ENCODE measurements at regions of chr1 and their contacts with region 1.

Region 1: GRCh38 chr1:186283374-186283773 is 91.7 kb downstream of the TPR start:
- DNase-seq: no peak
- ATAC-seq: peak; percentile 69
- H3K4me3 Mint-ChIP-seq: no peak overlapping the region
- H3K27ac Mint-ChIP-seq: peak overlapping the region; percentile 59
- H3K4me1 Mint-ChIP-seq: peaks cover 35% of the 10 kb centered on the region
- H3K27me3 Mint-ChIP-seq: no peaks in the 10 kb centered on the region

Region 2: DNA sequence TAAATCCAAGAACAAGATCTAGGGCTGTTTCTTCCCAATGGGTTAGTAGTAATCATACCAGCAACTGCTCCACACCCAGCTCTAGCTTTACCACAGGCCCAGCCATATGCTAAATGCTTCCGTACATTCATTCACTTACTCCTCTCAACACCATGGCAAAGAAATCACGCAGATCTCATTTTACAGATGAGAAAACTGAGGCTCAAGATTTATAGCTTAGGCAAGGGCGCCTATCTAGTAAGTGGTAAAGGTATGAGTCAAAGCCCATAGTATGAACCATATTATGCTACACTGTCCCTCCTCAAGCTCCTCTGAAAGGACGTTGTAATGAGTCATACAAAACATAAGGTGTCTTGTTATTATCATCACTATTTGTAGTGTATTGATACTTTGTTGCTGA is 1391.3 kb before region 1 on chr1:
- CTCF ChIA-PET with region 1: no interaction called
- POLR2A ChIA-PET with region 1: no interaction called
- intact Hi-C with region 1: loop called in 1 of 2 experiments (anchors 5 kb)
- DNase-seq: peak; percentile 48
- ATAC-seq: peak; percentile 74
- H3K4me3 Mint-ChIP-seq: no peak overlapping the region
- H3K27ac Mint-ChIP-seq: peak overlapping the region; percentile 67
- H3K4me1 Mint-ChIP-seq: peaks cover 52% of the 10 kb centered on the region
- H3K27me3 Mint-ChIP-seq: no peaks in the 10 kb centered on the region

Region 3: DNA sequence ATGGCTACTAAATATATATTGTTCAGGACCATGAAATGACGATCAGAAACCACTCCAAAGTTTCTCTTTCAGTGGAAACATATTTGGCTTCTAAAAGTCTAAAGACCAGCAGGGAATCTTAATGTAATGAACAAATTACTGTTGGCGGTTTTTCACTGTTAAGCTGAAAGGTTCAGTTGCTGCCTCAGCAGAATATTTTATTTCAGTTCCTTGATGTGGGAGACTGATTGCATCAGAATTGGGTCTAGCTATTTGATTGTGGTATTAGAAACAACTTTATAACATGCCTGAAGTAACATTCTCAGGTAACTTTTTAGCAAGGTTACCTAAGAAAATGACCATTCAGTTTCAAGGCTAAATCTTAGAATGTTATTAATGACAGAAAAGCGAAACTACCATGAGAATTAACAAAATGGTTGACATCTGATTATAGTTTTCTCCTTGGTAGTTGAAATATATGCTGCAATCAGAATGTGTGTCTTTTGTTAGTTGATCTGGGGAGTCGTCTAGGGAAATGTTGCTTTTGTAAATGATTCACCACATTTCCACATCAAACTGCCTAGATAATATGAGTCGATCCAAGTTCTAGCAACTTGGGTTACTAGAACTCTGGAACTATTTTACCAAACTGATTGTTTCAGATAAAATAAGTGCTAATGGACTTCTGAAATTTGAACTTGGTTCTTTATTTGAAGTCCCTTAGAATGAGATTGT is 348.7 kb before region 1 on chr1:
- CTCF ChIA-PET with region 1: no interaction called
- POLR2A ChIA-PET with region 1: no interaction called
- intact Hi-C with region 1: no loop called
- DNase-seq: no peak
- ATAC-seq: no peak
- H3K4me3 Mint-ChIP-seq: no peak overlapping the region
- H3K27ac Mint-ChIP-seq: no peak overlapping the region
- H3K4me1 Mint-ChIP-seq: no peaks in the 10 kb centered on the region
- H3K27me3 Mint-ChIP-seq: peaks cover 4% of the 10 kb centered on the region

Region 4: GRCh38 chr1:186026946-186027345 is 256.4 kb before region 1 on chr1:
- CTCF ChIA-PET with region 1: no interaction called
- POLR2A ChIA-PET with region 1: no interaction called
- intact Hi-C with region 1: no loop called
- DNase-seq: no peak
- ATAC-seq: no peak
- H3K4me3 Mint-ChIP-seq: no peak overlapping the region
- H3K27ac Mint-ChIP-seq: no peak overlapping the region
- H3K4me1 Mint-ChIP-seq: no peaks in the 10 kb centered on the region
- H3K27me3 Mint-ChIP-seq: peaks cover 2% of the 10 kb centered on the region

Region 5: DNA sequence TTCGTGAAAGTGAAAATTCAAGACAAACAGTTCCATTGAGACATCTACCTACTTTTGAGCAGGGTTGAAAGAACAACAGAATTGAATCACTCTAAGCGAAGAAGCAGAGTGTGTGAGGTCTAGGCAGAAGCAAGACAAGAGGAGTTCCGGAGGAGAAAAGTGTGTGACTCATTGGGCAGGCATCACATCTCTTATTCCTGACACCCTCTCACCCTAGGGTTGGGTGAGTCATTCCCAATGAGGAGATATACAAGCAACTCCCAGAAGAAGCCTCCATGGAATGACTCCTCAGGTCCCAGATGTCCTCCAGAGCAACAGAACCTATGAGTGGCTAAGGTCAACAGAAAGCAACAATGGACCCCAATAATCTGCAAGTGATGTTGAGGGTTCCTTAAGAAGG is 46.5 kb before region 1 on chr1:
- CTCF ChIA-PET with region 1: no interaction called
- POLR2A ChIA-PET with region 1: no interaction called
- intact Hi-C with region 1: no loop called
- DNase-seq: no peak
- ATAC-seq: no peak
- H3K4me3 Mint-ChIP-seq: no peak overlapping the region
- H3K27ac Mint-ChIP-seq: no peak overlapping the region
- H3K4me1 Mint-ChIP-seq: no peaks in the 10 kb centered on the region
- H3K27me3 Mint-ChIP-seq: peaks cover 7% of the 10 kb centered on the region

Region 6: GRCh38 chr1:186255266-186255665 is 28.1 kb before region 1 on chr1:
- CTCF ChIA-PET with region 1: no interaction called
- POLR2A ChIA-PET with region 1: no interaction called
- intact Hi-C with region 1: no loop called
- DNase-seq: no peak
- ATAC-seq: no peak
- H3K4me3 Mint-ChIP-seq: no peak overlapping the region
- H3K27ac Mint-ChIP-seq: no peak overlapping the region
- H3K4me1 Mint-ChIP-seq: no peaks in the 10 kb centered on the region
- H3K27me3 Mint-ChIP-seq: peaks cover 8% of the 10 kb centered on the region

Region 7: GRCh38 chr1:187336441-187337168 is 1053.2 kb after region 1 on chr1:
- CTCF ChIA-PET with region 1: no interaction called
- POLR2A ChIA-PET with region 1: no interaction called
- intact Hi-C with region 1: loop called in 1 of 2 experiments (anchors 5 kb)
- DNase-seq: no peak
- ATAC-seq: peak; percentile 74
- H3K4me3 Mint-ChIP-seq: no peak overlapping the region
- H3K27ac Mint-ChIP-seq: no peak overlapping the region
- H3K4me1 Mint-ChIP-seq: peaks cover 5% of the 10 kb centered on the region
- H3K27me3 Mint-ChIP-seq: no peaks in the 10 kb centered on the region

Measured in activated CD4-positive, alpha-beta T cell treated with anti-CD3 and anti-CD28 coated beads for 36 hours (primary cell).